ENCODE measurements at regions of chr9 and their contacts with region 1.

Region 1: DNA sequence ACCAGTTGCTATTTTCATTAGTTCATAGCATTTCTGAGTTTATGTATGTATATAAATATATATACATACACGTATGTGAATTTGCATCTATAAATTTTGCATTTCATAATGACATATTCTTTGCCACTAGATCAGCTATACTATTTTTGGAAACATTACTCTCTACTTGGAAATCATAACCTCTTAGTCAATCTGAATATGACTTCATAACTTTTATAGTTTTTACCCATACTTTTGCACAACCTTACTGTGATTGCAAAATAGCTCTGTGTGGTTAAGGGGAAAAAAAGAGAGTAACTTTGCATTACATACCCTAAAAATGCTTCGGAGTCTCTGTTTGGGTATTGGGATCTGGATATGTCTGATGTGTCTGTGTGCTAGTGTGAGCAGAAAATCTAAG is 44.9 kb upstream of the ADAMTSL1 start:
- DNase-seq: no peak
- ATAC-seq: no peak
- H3K4me3 ChIP-seq: no peak overlapping the region
- H3K4me3 Mint-ChIP-seq: no peak overlapping the region
- H3K27ac ChIP-seq: no peak overlapping the region
- H3K27ac Mint-ChIP-seq: no peak overlapping the region
- H3K4me1 ChIP-seq: no peaks in the 10 kb centered on the region
- H3K4me1 Mint-ChIP-seq: no peaks in the 10 kb centered on the region
- H3K27me3 ChIP-seq: no peaks in the 10 kb centered on the region
- H3K27me3 Mint-ChIP-seq: peaks cover 4% of the 10 kb centered on the region
- CTCF ChIP-seq: no peak

Region 2: GRCh38 chr9:18362901-18363685 is 66.0 kb before region 1 on chr9:
- CTCF ChIA-PET with region 1: no interaction called
- POLR2A ChIA-PET with region 1: no interaction called
- intact Hi-C with region 1: loop called in 1 of 2 experiments (anchors 10 kb)
- DNase-seq: no peak
- ATAC-seq: no peak
- H3K4me3 ChIP-seq: no peak overlapping the region
- H3K4me3 Mint-ChIP-seq: no peak overlapping the region
- H3K27ac ChIP-seq: no peak overlapping the region
- H3K27ac Mint-ChIP-seq: no peak overlapping the region
- H3K4me1 ChIP-seq: no peaks in the 10 kb centered on the region
- H3K4me1 Mint-ChIP-seq: no peaks in the 10 kb centered on the region
- H3K27me3 ChIP-seq: no peaks in the 10 kb centered on the region
- H3K27me3 Mint-ChIP-seq: peaks cover 5% of the 10 kb centered on the region
- CTCF ChIP-seq: no peak

Measured in CD4-positive, alpha-beta T cell (primary cell).